T-cell (primary cell): ENCODE measurements at regions of chr17 and their contacts with region 1.

Region 1: DNA sequence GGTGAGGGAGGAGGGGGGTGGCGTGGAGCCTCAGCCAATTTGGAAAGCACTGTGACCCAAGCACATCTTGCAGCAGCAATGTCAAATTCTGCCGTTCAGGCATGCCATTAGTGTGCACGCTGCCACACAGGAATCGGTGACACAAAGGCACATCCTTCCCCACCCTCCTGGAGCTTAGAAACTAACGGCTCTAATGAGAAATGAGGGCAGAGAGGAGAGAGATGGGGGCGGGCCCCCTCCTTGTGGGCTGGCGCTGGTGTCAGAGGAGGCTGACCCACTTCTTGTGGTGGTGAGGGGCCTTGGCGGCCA is 94.8 kb downstream of the RTN4RL1 start:
- DNase-seq: no peak
- ATAC-seq: no peak
- H3K4me3 ChIP-seq: no peak overlapping the region
- H3K4me3 Mint-ChIP-seq: no peak overlapping the region
- H3K27ac ChIP-seq: no peak overlapping the region
- H3K27ac Mint-ChIP-seq: no peak overlapping the region
- H3K4me1 ChIP-seq: no peaks in the 10 kb centered on the region
- H3K4me1 Mint-ChIP-seq: no peaks in the 10 kb centered on the region
- H3K27me3 ChIP-seq: peaks cover 0 to 18% of the 10 kb centered on the region in 2 experiments
- H3K27me3 Mint-ChIP-seq: no peaks in the 10 kb centered on the region

Region 2: GRCh38 chr17:3282901-3283300 is 1352.6 kb after region 1 on chr17:
- CTCF ChIA-PET with region 1: no interaction called
- POLR2A ChIA-PET with region 1: interaction called in 1 of 2 experiments, 13 read pairs
- DNase-seq: no peak
- ATAC-seq: no peak
- H3K4me3 ChIP-seq: no peak overlapping the region
- H3K4me3 Mint-ChIP-seq: no peak overlapping the region
- H3K27ac ChIP-seq: no peak overlapping the region
- H3K27ac Mint-ChIP-seq: no peak overlapping the region
- H3K4me1 ChIP-seq: no peaks in the 10 kb centered on the region
- H3K4me1 Mint-ChIP-seq: no peaks in the 10 kb centered on the region
- H3K27me3 ChIP-seq: no peaks in the 10 kb centered on the region
- H3K27me3 Mint-ChIP-seq: peaks cover 0 to 12% of the 10 kb centered on the region in 2 donors